ENCODE measurements at regions of chr19 and their contacts with region 1.

Region 1: GRCh38 chr19:45439569-45440254 is 16.0 kb upstream of the ERCC1 start:
- DNase-seq: peak; percentile 82 to 96 (median 86)
- ATAC-seq: peak; percentile 81
- H3K4me3 ChIP-seq: peak overlapping the region; percentile 68
- H3K27ac ChIP-seq: peak overlapping the region; percentile 93
- H3K4me1 ChIP-seq: peaks cover 31 to 48% of the 10 kb centered on the region in 2 experiments
- H3K27me3 ChIP-seq: no peaks in the 10 kb centered on the region
- CTCF ChIP-seq: peak; percentile 86 to 92 (median 90)
- EP300 ChIP-seq: peak; percentile 81
- POLR2A ChIP-seq: peak; percentile 48; the same call in 1 of the 2 replicates
- RAD21 ChIP-seq: peak; percentile 96 to 99

Region 2: GRCh38 chr19:45423589-45424190 is 16.0 kb before region 1 on chr19 and contains the start of gene ERCC1:
- CTCF ChIA-PET with region 1: interaction called, 11 read pairs
- POLR2A ChIA-PET with region 1: interaction called, 12 read pairs
- in situ Hi-C with region 1: no loop called
- intact Hi-C with region 1: no loop called
- DNase-seq: peak; percentile 98 to 99 (median 98)
- ATAC-seq: peak; percentile 88
- H3K4me3 ChIP-seq: peak within 1 kb of the TSS; percentile 54
- H3K27ac ChIP-seq: peak within 1 kb of the TSS; percentile 99
- H3K4me1 ChIP-seq: peaks cover 22 to 61% of the 10 kb centered on the region in 2 experiments; a peak in 4 of 5 replicates
- H3K27me3 ChIP-seq: no peaks in the 10 kb centered on the region
- CTCF ChIP-seq: no peak
- EP300 ChIP-seq: peak; percentile 47
- POLR2A ChIP-seq: peak; percentile 96
- RAD21 ChIP-seq: no peak
- polyA plus RNA-seq, gene ERCC1: 9.3 to 17.0 TPM

Region 3: DNA sequence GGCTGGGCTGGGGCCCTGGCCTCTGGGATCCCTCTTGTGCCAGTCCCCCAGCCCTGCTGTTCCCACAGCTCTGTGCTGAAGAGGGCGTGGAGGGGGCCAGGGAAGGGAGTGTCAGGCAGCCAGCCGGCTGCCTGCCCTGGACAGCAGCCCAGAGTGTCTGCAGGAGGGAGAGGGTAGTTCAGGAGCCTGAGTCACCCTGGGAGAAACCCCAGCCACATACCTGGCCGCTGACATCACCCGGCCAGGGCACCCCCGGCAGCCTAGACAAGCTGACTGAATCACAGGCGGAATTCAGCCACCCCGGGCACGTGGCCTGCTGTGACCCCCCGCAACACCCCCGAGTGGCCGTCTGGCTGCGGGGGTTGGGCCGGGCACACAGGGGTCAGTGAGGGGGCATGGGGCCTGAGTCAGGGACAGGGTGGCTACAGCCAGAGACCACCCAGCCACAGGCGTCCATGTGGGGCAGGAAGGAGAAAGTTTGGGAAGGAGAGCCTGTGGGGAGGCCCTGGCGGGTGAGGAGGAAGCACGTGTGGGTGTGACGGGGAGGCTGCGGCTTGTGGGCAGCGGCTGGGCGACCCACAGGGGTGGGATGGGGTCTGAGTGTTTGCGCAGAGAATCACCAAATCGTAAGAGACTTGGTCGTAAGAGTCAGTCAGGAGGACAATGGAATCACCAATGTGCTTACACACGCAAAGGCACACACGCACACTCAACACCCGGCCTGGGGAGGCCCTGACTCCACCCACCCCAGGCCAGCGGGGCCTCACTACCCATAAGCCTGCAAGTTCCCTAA is 16.2 kb after region 1 on chr19:
- CTCF ChIA-PET with region 1: no interaction called
- POLR2A ChIA-PET with region 1: interaction called, 10 read pairs
- in situ Hi-C with region 1: no loop called
- intact Hi-C with region 1: no loop called
- DNase-seq: peak; percentile 84 to 93 (median 88)
- ATAC-seq: peak; percentile 94
- H3K4me3 ChIP-seq: no peak overlapping the region
- H3K27ac ChIP-seq: peak overlapping the region; percentile 86
- H3K4me1 ChIP-seq: peaks cover 13 to 19% of the 10 kb centered on the region in 2 experiments
- H3K27me3 ChIP-seq: no peaks in the 10 kb centered on the region
- CTCF ChIP-seq: no peak
- EP300 ChIP-seq: no peak
- POLR2A ChIP-seq: no peak; the same call in none of the 2 replicates
- RAD21 ChIP-seq: no peak

Region 4: DNA sequence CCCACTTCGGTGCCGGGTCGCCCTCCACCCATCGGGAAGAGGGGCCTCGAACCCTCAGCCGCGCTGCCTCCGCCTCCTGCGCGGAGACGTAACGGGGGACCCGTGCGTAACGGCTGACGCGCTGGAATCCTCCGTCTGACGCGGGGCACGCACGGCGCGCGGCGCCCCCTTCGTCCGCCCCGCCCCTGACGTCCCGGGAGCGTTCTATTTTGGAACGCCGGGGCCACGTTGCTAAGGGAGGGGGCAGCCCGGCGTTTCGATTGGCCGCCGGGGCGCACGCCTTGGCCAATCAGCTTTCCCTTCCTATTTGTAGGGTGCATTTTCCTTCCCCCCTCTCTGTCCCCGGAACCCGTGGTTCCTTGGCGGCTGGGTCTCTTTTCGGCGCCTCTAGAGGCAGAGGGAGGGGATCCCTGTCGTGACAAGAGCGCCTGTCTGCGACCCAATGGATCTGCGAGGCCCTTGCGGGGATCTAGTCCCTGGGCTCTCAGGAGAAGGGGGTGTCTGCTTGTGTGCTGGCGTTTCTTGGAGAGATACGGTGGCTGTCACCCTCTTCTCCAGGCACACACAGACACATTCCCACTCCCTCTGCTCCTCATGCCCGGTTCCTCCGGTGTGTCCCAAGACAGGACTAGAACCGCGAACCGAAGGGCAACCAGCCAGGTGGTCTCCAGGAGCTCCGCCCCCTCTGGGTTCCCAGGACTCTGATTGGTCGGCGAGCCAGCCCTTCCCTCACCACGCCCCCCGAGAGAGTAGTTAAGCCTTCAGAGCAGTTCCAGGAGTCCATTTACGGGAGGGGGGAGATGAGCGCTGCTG is 29.6 kb after region 1 on chr19:
- CTCF ChIA-PET with region 1: interaction called, 11 read pairs
- POLR2A ChIA-PET with region 1: interaction called, 51 read pairs
- in situ Hi-C with region 1: no loop called
- intact Hi-C with region 1: no loop called
- DNase-seq: peak; percentile 94 to 97 (median 97)
- ATAC-seq: peak; percentile 90
- H3K4me3 ChIP-seq: peak overlapping the region; percentile 88
- H3K27ac ChIP-seq: peak overlapping the region; percentile 88
- H3K4me1 ChIP-seq: peaks cover 21 to 53% of the 10 kb centered on the region in 2 experiments; a peak in 4 of 5 replicates
- H3K27me3 ChIP-seq: no peaks in the 10 kb centered on the region
- CTCF ChIP-seq: no peak
- EP300 ChIP-seq: no peak
- POLR2A ChIP-seq: peak; percentile 86
- RAD21 ChIP-seq: no peak

Region 5: GRCh38 chr19:45478454-45479238 is 38.9 kb after region 1 on chr19:
- CTCF ChIA-PET with region 1: interaction called, 179 read pairs
- POLR2A ChIA-PET with region 1: interaction called, 27 read pairs
- in situ Hi-C with region 1: loop called (anchors 5 kb)
- intact Hi-C with region 1: loop called (anchors 1 kb)
- DNase-seq: peak; percentile 80 to 95 (median 82)
- ATAC-seq: peak; percentile 97
- H3K4me3 ChIP-seq: peak overlapping the region; percentile 45
- H3K27ac ChIP-seq: peak overlapping the region; percentile 98
- H3K4me1 ChIP-seq: peaks cover 5 to 6% of the 10 kb centered on the region in 2 experiments; a peak in 2 of 5 replicates
- H3K27me3 ChIP-seq: no peaks in the 10 kb centered on the region
- CTCF ChIP-seq: peak; percentile 95 to 98 (median 98)
- EP300 ChIP-seq: peak; percentile 59
- POLR2A ChIP-seq: peak; percentile 41; the same call in 1 of the 2 replicates
- RAD21 ChIP-seq: peak; percentile 98 to 99

Region 6: GRCh38 chr19:45485305-45486077 is 45.8 kb after region 1 on chr19:
- CTCF ChIA-PET with region 1: interaction called, 179 read pairs
- POLR2A ChIA-PET with region 1: interaction called, 11 read pairs
- in situ Hi-C with region 1: no loop called
- intact Hi-C with region 1: no loop called
- DNase-seq: peak; percentile 85 to 99 (median 86)
- ATAC-seq: peak; percentile 98
- H3K4me3 ChIP-seq: peak overlapping the region; percentile 54
- H3K27ac ChIP-seq: peak overlapping the region; percentile 49
- H3K4me1 ChIP-seq: peaks cover 3 to 10% of the 10 kb centered on the region in 2 experiments; a peak in 3 of 5 replicates
- H3K27me3 ChIP-seq: no peaks in the 10 kb centered on the region
- CTCF ChIP-seq: peak; percentile 91 to 93 (median 93)
- EP300 ChIP-seq: no peak
- POLR2A ChIP-seq: no peak
- RAD21 ChIP-seq: peak; percentile 46 to 63

Region 7: GRCh38 chr19:45523642-45524256 is 84.0 kb after region 1 on chr19:
- CTCF ChIA-PET with region 1: interaction called, 4 read pairs
- POLR2A ChIA-PET with region 1: interaction called, 10 read pairs
- in situ Hi-C with region 1: no loop called
- intact Hi-C with region 1: no loop called
- DNase-seq: peak; percentile 77 to 83 (median 82)
- ATAC-seq: peak; percentile 86
- H3K4me3 ChIP-seq: no peak overlapping the region
- H3K27ac ChIP-seq: no peak overlapping the region
- H3K4me1 ChIP-seq: peaks cover 3 to 32% of the 10 kb centered on the region in 2 experiments; a peak in 3 of 5 replicates
- H3K27me3 ChIP-seq: no peaks in the 10 kb centered on the region
- CTCF ChIP-seq: peak; percentile 86 to 96 (median 95)
- EP300 ChIP-seq: no peak
- POLR2A ChIP-seq: no peak; the same call in 1 of the 2 replicates
- RAD21 ChIP-seq: peak; percentile 69 to 77

Region 8: GRCh38 chr19:45584332-45585157 is 144.8 kb after region 1 on chr19 and contains the start of gene OPA3:
- CTCF ChIA-PET with region 1: no interaction called
- POLR2A ChIA-PET with region 1: no interaction called
- in situ Hi-C with region 1: no loop called
- intact Hi-C with region 1: no loop called
- DNase-seq: peak; percentile 95 to 100 (median 97)
- ATAC-seq: peak; percentile 97
- H3K4me3 ChIP-seq: peak within 1 kb of the TSS; percentile 68
- H3K27ac ChIP-seq: peak within 1 kb of the TSS; percentile 99
- H3K4me1 ChIP-seq: peaks cover 13 to 24% of the 10 kb centered on the region in 2 experiments; a peak in 4 of 5 replicates
- H3K27me3 ChIP-seq: no peaks in the 10 kb centered on the region
- CTCF ChIP-seq: peak in 1 of 3 experiments; percentile 2; a peak in 1 of 6 replicates
- EP300 ChIP-seq: 0 out of 2 replicates have a peak, but pooled peaks have one; percentile 2
- POLR2A ChIP-seq: peak; percentile 96
- RAD21 ChIP-seq: no peak
- polyA plus RNA-seq, gene OPA3: 1.4 to 2.1 TPM

Region 9: GRCh38 chr19:45659096-45659729 is 219.5 kb after region 1 on chr19:
- CTCF ChIA-PET with region 1: no interaction called
- POLR2A ChIA-PET with region 1: no interaction called
- in situ Hi-C with region 1: no loop called
- intact Hi-C with region 1: no loop called
- DNase-seq: peak in 2 of 4 experiments; percentile 14
- ATAC-seq: peak; percentile 49; the same call in 2 of the 3 replicates
- H3K4me3 ChIP-seq: no peak overlapping the region
- H3K27ac ChIP-seq: no peak overlapping the region
- H3K4me1 ChIP-seq: peaks cover 0 to 7% of the 10 kb centered on the region in 2 experiments; a peak in 3 of 5 replicates
- H3K27me3 ChIP-seq: no peaks in the 10 kb centered on the region
- CTCF ChIP-seq: no peak
- EP300 ChIP-seq: no peak
- POLR2A ChIP-seq: no peak
- RAD21 ChIP-seq: no peak

Measured in K562 (cell line).